ENCODE measurements at regions of chr20 and their contacts with region 1.

Region 1: GRCh38 chr20:2451939-2452732 is 18.5 kb downstream of the SNRPB start:
- DNase-seq: peak; percentile 81 to 82
- ATAC-seq: peak; percentile 74 to 88
- H3K4me3 ChIP-seq: no peak overlapping the region
- H3K27ac ChIP-seq: no peak overlapping the region
- H3K4me1 ChIP-seq: no peaks in the 10 kb centered on the region
- CTCF ChIP-seq: peak; percentile 85
- EP300 ChIP-seq: no peak
- POLR2A ChIP-seq: no peak
- RAD21 ChIP-seq: peak; percentile 75 to 88

Region 2: GRCh38 chr20:2133318-2134183 is 318.6 kb before region 1 on chr20:
- CTCF ChIA-PET with region 1: no interaction called
- POLR2A ChIA-PET with region 1: no interaction called
- DNase-seq: peak; percentile 35 to 41
- ATAC-seq: peak; percentile 70 to 81; a peak in 5 of 6 replicates
- H3K4me3 ChIP-seq: no peak overlapping the region
- H3K27ac ChIP-seq: peak overlapping the region; percentile 14 to 68; a peak in 4 of 6 replicates
- H3K4me1 ChIP-seq: peaks cover 40% of the 10 kb centered on the region
- CTCF ChIP-seq: no peak
- EP300 ChIP-seq: no peak
- POLR2A ChIP-seq: no peak
- RAD21 ChIP-seq: no peak

Region 3: GRCh38 chr20:2195614-2196013 is 256.5 kb before region 1 on chr20:
- CTCF ChIA-PET with region 1: interaction called, 16 read pairs
- POLR2A ChIA-PET with region 1: no interaction called
- DNase-seq: no peak
- ATAC-seq: peak; percentile 72 to 82
- H3K4me3 ChIP-seq: no peak overlapping the region
- H3K27ac ChIP-seq: no peak overlapping the region
- H3K4me1 ChIP-seq: no peaks in the 10 kb centered on the region
- CTCF ChIP-seq: no peak
- EP300 ChIP-seq: no peak
- POLR2A ChIP-seq: no peak
- RAD21 ChIP-seq: no peak

Region 4: GRCh38 chr20:2402271-2402980 is 49.7 kb before region 1 on chr20:
- CTCF ChIA-PET with region 1: interaction called, 13 read pairs
- POLR2A ChIA-PET with region 1: no interaction called
- DNase-seq: peak; percentile 54 to 58
- ATAC-seq: peak; percentile 63 to 79; a peak in 5 of 6 replicates
- H3K4me3 ChIP-seq: no peak overlapping the region
- H3K27ac ChIP-seq: no peak overlapping the region
- H3K4me1 ChIP-seq: no peaks in the 10 kb centered on the region
- CTCF ChIP-seq: peak; percentile 54
- EP300 ChIP-seq: no peak
- POLR2A ChIP-seq: no peak
- RAD21 ChIP-seq: peak; percentile 33 to 53; a peak in 3 of 5 replicates

Region 5: DNA sequence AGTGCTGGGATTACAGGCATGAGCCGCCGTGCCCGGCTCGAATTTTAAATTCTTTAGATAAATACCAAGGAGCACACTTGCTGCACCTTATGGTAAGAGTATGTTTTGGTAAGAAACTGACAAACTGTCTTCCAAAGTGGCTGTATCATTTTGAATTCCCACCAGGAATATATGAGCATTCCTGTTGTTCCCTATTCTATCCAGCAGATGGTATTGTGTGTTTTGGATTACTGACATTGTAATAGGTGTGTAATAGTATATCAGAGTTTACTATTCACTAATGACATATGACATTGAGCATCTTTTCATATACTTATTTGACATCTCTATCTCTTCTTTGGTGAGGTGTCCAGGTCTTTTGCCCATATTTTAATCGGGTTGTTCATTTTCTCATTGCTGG is 30.9 kb before region 1 on chr20:
- CTCF ChIA-PET with region 1: interaction called, 24 read pairs
- POLR2A ChIA-PET with region 1: no interaction called
- DNase-seq: peak; percentile 29 to 52
- ATAC-seq: peak; percentile 74 to 81; a peak in 5 of 6 replicates
- H3K4me3 ChIP-seq: no peak overlapping the region
- H3K27ac ChIP-seq: no peak overlapping the region
- H3K4me1 ChIP-seq: no peaks in the 10 kb centered on the region
- CTCF ChIP-seq: peak; percentile 45
- EP300 ChIP-seq: no peak
- POLR2A ChIP-seq: no peak
- RAD21 ChIP-seq: peak; percentile 23 to 47; a peak in 4 of 5 replicates

Region 6: DNA sequence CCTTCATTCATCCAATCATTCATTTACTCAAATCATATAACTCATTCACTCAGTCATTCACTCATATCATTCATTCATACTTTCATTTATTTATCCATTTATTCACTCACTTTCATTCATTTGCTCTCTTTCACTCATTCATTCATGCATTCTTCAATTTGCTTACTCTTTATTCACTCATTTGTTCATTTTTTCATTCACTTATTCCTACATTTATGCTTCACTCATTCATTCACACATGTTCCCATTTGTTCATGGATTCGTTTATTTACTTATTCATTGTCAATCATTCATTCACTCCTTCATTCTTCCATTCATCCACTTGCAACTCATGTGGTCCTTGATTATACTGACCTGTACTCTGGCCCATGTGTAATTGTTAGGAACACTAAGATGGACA is 21.0 kb before region 1 on chr20:
- CTCF ChIA-PET with region 1: interaction called, 65 read pairs
- POLR2A ChIA-PET with region 1: no interaction called
- DNase-seq: no peak
- ATAC-seq: no peak
- H3K4me3 ChIP-seq: no peak overlapping the region
- H3K27ac ChIP-seq: no peak overlapping the region
- H3K4me1 ChIP-seq: no peaks in the 10 kb centered on the region
- CTCF ChIP-seq: no peak
- EP300 ChIP-seq: no peak
- POLR2A ChIP-seq: no peak
- RAD21 ChIP-seq: no peak

Region 7: DNA sequence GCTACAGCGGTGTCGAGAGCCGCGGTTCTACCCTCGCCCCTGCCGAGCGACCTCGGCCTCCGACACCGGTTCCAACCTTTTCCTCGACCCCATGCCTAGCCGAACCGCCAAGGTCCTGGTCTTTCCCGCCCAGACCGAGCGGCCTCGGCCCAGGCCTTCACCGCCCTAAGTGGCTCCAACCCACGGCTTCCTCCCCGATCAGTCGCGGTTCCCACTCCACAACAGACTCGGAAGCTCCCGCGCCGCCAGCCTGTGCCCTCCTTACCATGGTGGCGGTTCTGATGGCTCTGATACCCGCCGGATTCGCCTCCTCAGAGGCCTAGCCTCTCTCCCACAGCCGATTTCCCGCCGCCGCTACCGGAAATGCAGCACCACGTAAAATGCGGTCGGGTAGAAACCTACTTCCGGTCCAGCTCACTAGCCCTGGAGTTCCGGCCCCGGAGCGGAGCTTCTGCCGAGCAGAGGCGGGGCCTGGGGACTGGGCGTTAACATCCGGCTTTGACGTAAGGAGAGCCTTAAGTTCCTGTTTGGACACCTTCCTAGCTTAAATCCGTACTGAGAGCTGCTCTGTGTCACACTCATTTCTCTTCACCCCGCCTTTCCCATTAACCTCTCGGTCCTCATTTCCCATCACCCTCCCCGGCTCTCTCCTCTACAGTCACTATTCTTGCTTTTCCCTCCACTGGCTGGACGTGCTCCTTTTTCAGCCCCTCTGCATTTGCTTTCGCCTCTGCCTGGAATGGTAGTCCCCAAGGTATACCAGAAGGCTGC is 18.5 kb after region 1 on chr20 and contains the start of gene SNRPB:
- CTCF ChIA-PET with region 1: interaction called, 52 read pairs
- POLR2A ChIA-PET with region 1: interaction called, 26 read pairs
- DNase-seq: peak; percentile 99 to 100
- ATAC-seq: peak; percentile 97 to 98
- H3K4me3 ChIP-seq: peak within 1 kb of the TSS; percentile 67
- H3K27ac ChIP-seq: peak within 1 kb of the TSS; percentile 92 to 93
- H3K4me1 ChIP-seq: peaks cover 25% of the 10 kb centered on the region
- CTCF ChIP-seq: no peak
- EP300 ChIP-seq: no peak
- POLR2A ChIP-seq: peak; percentile 91
- RAD21 ChIP-seq: no peak
- polyA plus RNA-seq, gene SNRPB: 486 and 557 TPM in 2 replicates

Region 8: GRCh38 chr20:2626853-2627541 is 174.9 kb after region 1 on chr20:
- CTCF ChIA-PET with region 1: no interaction called
- POLR2A ChIA-PET with region 1: no interaction called
- DNase-seq: peak in 1 of 2 experiments; percentile 89
- ATAC-seq: peak; percentile 75 to 86
- H3K4me3 ChIP-seq: no peak overlapping the region
- H3K27ac ChIP-seq: peak overlapping the region; percentile 50 to 65
- H3K4me1 ChIP-seq: peaks cover 12% of the 10 kb centered on the region
- CTCF ChIP-seq: no peak
- EP300 ChIP-seq: no peak
- POLR2A ChIP-seq: no peak
- RAD21 ChIP-seq: no peak